PC-3 (cell line): ENCODE measurements at regions of chr11 and their contacts with region 1.

Region 1: DNA sequence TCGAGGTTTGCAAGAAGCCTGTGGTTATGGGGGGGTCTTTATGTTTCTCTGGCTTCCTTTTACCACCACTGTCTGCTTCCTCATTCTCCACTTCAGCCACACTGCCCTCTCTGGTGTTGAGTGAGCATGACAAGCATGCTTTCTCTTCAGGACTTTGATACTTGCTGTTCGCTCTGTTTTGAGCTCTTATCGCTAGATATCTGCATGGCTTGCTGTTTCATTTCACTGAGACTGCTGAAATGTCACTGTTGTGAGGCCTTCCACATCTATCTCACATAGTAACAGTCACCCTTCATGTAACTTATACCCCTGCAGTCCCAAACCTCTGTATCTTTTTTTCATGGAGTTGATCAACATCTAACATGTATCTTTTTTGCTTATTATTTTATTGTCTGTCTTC is 59.8 kb downstream of the TMEM135 start:
- DNase-seq: peak; percentile 76
- ATAC-seq: peak; percentile 79; the same call in 1 of the 2 replicates
- H3K4me3 ChIP-seq: no peak overlapping the region
- H3K27ac ChIP-seq: no peak overlapping the region
- H3K4me1 ChIP-seq: no peaks in the 10 kb centered on the region
- H3K27me3 ChIP-seq: no peaks in the 10 kb centered on the region
- CTCF ChIP-seq: peak; percentile 94

Region 2: DNA sequence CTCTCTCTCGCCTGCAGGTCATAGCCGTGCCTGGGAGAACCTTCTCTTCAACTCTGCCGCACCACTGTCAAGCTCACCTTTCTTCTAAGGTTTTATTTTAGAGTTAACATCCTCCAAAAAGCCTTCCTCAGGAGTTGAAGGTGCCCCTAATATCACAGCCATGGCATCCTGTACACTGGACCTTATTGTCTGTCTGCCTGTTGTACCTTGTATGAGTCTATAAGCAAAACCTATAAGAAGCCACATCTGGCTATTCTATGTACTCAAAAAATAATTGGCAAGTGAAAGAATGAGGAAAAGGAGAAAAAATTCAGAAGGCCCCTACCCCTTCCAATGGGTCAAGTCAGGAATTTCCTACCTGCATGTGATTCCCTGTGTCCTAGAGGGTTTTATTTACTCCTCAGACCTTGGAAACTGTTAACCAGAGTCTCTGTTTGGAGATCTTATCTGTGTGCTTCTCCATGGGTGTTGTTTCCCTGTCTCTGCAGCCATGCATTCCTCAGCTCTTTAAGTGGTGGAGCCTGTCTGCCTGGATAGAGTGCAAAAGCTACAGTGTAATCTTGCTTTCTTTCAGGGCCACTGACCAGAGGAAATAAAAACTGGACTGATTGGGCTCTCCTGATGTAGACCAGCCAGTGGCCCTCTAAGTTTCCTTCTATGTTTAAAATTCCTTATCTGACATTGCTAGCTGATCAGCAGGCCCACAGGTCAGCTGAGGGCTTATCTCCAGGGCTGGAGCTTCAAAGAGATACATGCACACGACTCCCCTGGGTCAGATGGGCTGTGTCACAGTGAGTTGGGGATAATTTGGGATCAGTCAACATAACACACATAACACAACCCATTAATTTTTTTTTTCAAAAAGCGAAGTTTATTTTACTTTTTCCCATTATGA is 97.5 kb before region 1 on chr11:
- CTCF ChIA-PET with region 1: interaction called, 3 read pairs
- POLR2A ChIA-PET with region 1: no interaction called
- intact Hi-C with region 1: loop called (anchors 5 kb)
- DNase-seq: peak; percentile 81
- ATAC-seq: peak; percentile 87
- H3K4me3 ChIP-seq: no peak overlapping the region
- H3K27ac ChIP-seq: peak overlapping the region; percentile 11
- H3K4me1 ChIP-seq: peaks cover 19% of the 10 kb centered on the region
- H3K27me3 ChIP-seq: no peaks in the 10 kb centered on the region
- CTCF ChIP-seq: no peak